Activated T-helper 2 cell treated with anti-CD3 and anti-CD28 coated beads, Interferon-gamma antibody, Interleukin-2, Interleukin-4, amounts not matched to agents 10 μg/mL and 5 μg/mL and 100 μg/mL, durations not matched to agents 14 hours and 24 hours and 36 hours (primary cell): ENCODE measurements at regions of chr2 and their contacts with region 1.

Region 1: DNA sequence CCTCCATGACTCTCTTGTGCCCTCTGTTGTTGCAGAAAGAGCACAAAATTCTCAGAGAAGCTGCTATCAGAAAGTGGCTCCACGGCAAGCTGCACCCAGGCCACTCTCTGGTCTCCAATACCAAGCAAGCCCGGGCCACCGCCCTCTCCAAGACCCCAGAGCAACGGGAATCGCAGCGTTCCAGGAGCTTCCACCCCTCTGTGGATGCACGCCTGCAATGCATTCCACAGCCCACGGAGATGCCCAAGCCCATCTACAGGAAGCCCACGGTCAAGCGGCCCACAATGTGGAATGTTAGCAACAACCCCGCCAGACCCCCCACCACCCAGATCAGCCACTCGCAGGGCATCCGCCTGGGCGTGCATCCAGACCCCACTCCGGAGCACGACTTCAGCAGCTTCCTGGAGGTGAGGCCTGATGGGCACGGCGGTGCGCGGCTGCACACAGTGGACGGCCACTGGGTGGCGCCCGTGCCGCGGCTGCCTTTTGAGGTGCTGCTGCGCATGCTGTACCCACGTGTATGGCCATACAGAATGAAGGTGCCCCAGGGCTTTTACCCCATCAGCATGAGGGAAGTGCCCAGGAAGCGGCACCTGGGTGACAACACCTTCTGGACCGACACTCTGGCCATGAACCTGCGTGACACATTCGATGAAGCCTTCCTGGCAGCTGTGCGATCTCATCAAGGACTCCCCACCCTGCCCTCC is 6.3 kb downstream of the ANKRD53 start:
- DNase-seq: peak; percentile 75
- H3K4me3 Mint-ChIP-seq: no peak overlapping the region
- H3K27ac Mint-ChIP-seq: no peak overlapping the region
- H3K4me1 Mint-ChIP-seq: peaks cover 7% of the 10 kb centered on the region
- H3K27me3 Mint-ChIP-seq: no peaks in the 10 kb centered on the region

Region 2: GRCh38 chr2:71000780-71001591 is 16.3 kb after region 1 on chr2:
- intact Hi-C with region 1: loop called (anchors 1 kb)
- DNase-seq: peak; percentile 71
- H3K4me3 Mint-ChIP-seq: peak overlapping the region; percentile 70
- H3K27ac Mint-ChIP-seq: peak overlapping the region; percentile 68
- H3K4me1 Mint-ChIP-seq: peaks cover 16% of the 10 kb centered on the region
- H3K27me3 Mint-ChIP-seq: no peaks in the 10 kb centered on the region

Region 3: GRCh38 chr2:71071667-71072398 is 87.1 kb after region 1 on chr2:
- intact Hi-C with region 1: no loop called
- DNase-seq: peak; percentile 28
- H3K4me3 Mint-ChIP-seq: peak overlapping the region; percentile 69
- H3K27ac Mint-ChIP-seq: peak overlapping the region; percentile 78
- H3K4me1 Mint-ChIP-seq: peaks cover 47% of the 10 kb centered on the region
- H3K27me3 Mint-ChIP-seq: no peaks in the 10 kb centered on the region